HCT116 (cell line): ENCODE measurements at regions of chr12 and their contacts with region 1.

Region 1: GRCh38 chr12:10562306-10562933 is 51.0 kb downstream of the MAGOHB start:
- DNase-seq: peak; percentile 48
- ATAC-seq: no peak
- H3K4me3 ChIP-seq: no peak overlapping the region
- H3K27ac ChIP-seq: no peak overlapping the region
- H3K4me1 ChIP-seq: no peaks in the 10 kb centered on the region
- H3K27me3 ChIP-seq: no peaks in the 10 kb centered on the region
- CTCF ChIP-seq: peak; percentile 49 to 83 (median 76); a peak in 5 of 6 replicates
- POLR2A ChIP-seq: no peak
- RAD21 ChIP-seq: peak; percentile 88

Region 2: DNA sequence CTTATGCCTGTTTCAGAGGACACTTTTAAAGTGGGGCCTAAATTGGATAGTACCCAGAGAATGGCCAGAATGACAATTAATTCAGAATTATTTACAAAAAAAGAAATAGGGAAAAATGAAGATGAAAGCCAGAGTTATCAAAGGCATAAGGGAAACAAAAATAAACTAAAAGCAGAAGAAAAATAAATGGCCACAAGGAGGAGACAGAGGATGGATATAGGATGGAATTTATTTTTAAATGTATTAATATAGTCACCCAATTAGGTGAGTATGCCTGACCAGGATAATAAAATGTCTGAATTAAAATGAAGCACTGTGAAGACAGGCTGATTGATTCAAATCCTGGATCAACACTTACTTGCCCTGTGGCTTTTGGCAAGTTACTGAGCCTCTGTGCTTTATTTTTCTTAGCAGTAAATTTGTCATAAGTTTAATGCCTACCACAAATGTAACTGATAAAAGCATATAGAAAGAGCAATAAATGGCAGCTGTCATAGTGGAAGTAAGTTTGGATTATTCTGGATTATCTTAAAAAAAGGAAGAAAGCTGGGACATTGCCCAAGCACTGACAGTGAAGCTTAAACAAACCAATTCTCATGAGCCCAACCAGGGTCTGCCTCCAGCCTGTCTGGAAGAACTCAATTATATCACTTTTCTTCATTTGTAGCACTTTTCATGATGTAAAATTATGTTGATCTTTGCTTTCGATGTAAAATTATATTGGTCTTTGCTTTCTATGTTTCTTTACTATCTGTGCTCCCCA is 528.5 kb before region 1 on chr12:
- CTCF ChIA-PET with region 1: no interaction called
- POLR2A ChIA-PET with region 1: no interaction called
- RAD21 ChIA-PET with region 1: no interaction called
- intact Hi-C with region 1: loop called (anchors 2 kb)
- DNase-seq: no peak
- ATAC-seq: 0 out of 2 replicates have a peak, but pooled peaks have one; percentile 25
- H3K4me3 ChIP-seq: no peak overlapping the region
- H3K27ac ChIP-seq: no peak overlapping the region
- H3K4me1 ChIP-seq: no peaks in the 10 kb centered on the region
- H3K27me3 ChIP-seq: peaks cover 6% of the 10 kb centered on the region
- CTCF ChIP-seq: peak; percentile 4 to 55 (median 51); a peak in 5 of 6 replicates
- POLR2A ChIP-seq: no peak
- RAD21 ChIP-seq: peak; percentile 60

Region 3: DNA sequence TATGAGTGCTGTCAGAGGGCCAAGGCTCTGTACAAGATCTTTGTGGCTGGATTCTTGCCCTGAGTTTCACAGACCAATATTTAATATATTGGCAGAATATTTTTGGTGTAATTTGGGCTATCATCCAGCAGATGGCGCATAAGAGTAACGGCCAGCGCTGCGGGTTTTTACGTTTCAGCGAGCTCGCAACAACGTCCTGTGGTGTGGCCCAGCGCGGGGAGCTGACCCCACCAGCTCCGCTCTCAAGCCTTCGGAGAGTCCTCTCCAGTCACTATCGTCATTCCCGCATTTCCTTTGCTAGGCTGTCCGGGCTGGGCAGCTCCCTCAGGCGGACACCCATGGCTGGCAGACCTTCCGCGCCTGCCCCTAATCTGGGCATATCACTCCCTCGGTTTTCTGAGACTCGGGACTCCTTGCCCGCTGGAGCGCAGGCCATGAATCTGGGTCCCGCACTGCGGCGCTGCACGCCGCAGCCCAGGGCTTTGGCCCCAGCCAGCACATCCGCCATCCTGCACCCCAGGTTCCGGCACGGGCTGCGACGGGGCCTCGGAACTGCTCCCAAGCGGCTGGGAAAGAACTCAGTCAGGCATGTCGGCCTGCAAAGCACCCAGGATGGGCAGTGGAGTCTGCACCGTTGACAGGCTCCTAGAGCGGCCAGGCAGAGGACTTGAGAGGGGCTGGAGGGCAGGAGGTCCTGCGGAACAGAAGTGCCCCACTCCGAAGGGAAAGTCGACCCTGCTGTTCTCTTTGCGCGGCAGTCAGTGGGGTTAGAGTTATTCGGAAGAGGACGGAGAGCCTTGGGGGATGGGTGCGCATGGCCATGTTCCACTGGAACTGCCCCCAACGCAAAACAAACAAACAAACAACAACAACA is 408.9 kb before region 1 on chr12:
- CTCF ChIA-PET with region 1: no interaction called
- POLR2A ChIA-PET with region 1: no interaction called
- RAD21 ChIA-PET with region 1: no interaction called
- intact Hi-C with region 1: loop called (anchors 1 kb)
- DNase-seq: peak; percentile 21
- ATAC-seq: peak; percentile 81
- H3K4me3 ChIP-seq: peak overlapping the region; percentile 23 to 38; a peak in 3 of 4 replicates
- H3K27ac ChIP-seq: peak overlapping the region; percentile 4; the same call in 1 of the 2 replicates
- H3K4me1 ChIP-seq: peaks cover 0 to 5% of the 10 kb centered on the region in 2 experiments; a peak in 1 of 4 replicates
- H3K27me3 ChIP-seq: no peaks in the 10 kb centered on the region
- CTCF ChIP-seq: peak; percentile 65 to 78 (median 74)
- POLR2A ChIP-seq: no peak
- RAD21 ChIP-seq: peak; percentile 65

Region 4: GRCh38 chr12:10235761-10236631 is 326.4 kb before region 1 on chr12:
- CTCF ChIA-PET with region 1: no interaction called
- POLR2A ChIA-PET with region 1: no interaction called
- RAD21 ChIA-PET with region 1: no interaction called
- intact Hi-C with region 1: loop called (anchors 1 kb)
- DNase-seq: peak; percentile 31
- ATAC-seq: peak; percentile 85
- H3K4me3 ChIP-seq: no peak overlapping the region
- H3K27ac ChIP-seq: no peak overlapping the region
- H3K4me1 ChIP-seq: no peaks in the 10 kb centered on the region
- H3K27me3 ChIP-seq: no peaks in the 10 kb centered on the region
- CTCF ChIP-seq: peak; percentile 73 to 79 (median 75)
- POLR2A ChIP-seq: no peak
- RAD21 ChIP-seq: peak; percentile 87

Region 5: DNA sequence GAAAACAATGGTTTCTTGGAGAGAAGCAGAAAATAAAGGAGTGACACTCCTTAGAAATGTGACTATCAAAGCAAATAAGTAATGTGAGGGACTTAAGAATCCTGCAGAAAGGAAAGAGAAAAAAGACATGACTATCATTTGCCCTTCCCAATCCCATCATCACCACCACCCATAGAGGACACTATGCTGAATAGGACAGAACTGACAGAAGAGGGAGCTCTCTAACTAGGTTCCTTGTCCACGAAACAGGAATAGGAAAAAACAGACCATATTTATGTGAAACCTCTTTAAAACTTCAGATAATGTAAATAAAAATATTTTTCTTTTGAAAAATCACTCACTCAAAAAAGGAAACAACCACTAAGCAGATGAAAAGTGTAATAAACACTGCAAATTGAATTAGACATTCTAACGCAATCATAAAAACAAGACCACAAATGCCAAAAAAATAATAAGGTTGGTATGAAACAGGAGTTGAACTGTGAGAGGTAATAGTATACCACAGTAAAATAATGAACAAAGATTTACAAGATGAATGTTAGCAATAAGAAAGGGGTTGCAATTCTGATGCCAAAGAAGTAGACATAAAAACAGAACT is 230.7 kb before region 1 on chr12:
- CTCF ChIA-PET with region 1: interaction called, 18 read pairs
- POLR2A ChIA-PET with region 1: no interaction called
- RAD21 ChIA-PET with region 1: interaction called in 1 of 2 experiments, 4 read pairs
- intact Hi-C with region 1: loop called (anchors 1 kb)
- DNase-seq: peak; percentile 56
- ATAC-seq: peak; percentile 98
- H3K4me3 ChIP-seq: no peak overlapping the region
- H3K27ac ChIP-seq: no peak overlapping the region
- H3K4me1 ChIP-seq: peaks cover 0 to 3% of the 10 kb centered on the region in 2 experiments; a peak in 1 of 4 replicates
- H3K27me3 ChIP-seq: no peaks in the 10 kb centered on the region
- CTCF ChIP-seq: peak; percentile 81 to 95 (median 83)
- POLR2A ChIP-seq: no peak
- RAD21 ChIP-seq: peak; percentile 94

Region 6: GRCh38 chr12:10364815-10365622 is 197.4 kb before region 1 on chr12:
- CTCF ChIA-PET with region 1: interaction called, 29 read pairs
- POLR2A ChIA-PET with region 1: no interaction called
- RAD21 ChIA-PET with region 1: interaction called in 1 of 2 experiments, 4 read pairs
- intact Hi-C with region 1: no loop called
- DNase-seq: peak; percentile 71
- ATAC-seq: peak; percentile 56
- H3K4me3 ChIP-seq: peak overlapping the region; percentile 71 to 74
- H3K27ac ChIP-seq: peak overlapping the region; percentile 89
- H3K4me1 ChIP-seq: peaks cover 37 to 52% of the 10 kb centered on the region in 2 experiments; a peak in 3 of 4 replicates
- H3K27me3 ChIP-seq: no peaks in the 10 kb centered on the region
- CTCF ChIP-seq: no peak
- POLR2A ChIP-seq: no peak
- RAD21 ChIP-seq: no peak